A673 (cell line): ENCODE measurements at regions of chr20 and their contacts with region 1.

Region 1: DNA sequence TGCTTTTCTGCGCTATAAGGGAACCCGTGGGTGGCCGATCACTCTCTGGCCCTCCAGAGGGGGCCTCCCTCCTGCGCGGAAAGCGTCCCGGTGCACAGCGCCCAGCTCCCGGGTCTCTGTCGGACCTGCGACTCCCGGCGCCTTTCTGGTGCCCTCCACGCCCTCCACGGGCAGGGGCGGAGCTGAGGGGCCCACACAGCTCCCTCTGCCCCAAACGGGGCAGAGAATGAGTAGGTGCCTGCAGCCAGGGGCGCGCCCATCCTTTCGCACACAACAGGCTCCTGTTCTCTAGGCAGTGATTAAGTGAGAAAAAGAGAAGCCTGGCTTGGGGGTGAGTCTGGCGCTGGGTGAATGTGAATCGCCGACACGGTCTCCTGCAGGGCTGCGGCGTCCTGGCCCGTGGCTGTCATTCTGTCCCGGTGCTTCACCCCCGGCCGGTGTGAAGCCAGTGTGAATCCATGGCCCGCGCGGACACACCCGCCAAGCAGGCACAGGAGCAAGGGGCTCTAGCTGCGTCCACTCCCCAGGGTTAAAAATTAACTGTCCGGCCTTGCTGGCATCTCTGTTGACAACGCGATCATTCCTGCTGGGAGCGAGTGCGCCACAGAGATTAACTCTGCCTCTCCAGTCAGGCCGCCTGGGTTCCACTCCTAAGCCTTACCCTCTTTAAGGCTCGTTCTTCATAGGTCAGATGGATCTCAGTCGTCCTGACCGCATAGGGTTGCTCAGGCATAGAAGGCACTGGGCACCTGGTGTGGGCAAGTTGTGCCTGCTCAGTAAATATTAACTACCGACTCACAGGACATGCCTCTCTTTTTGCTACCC is 88.8 kb downstream of the PCSK2 start:
- DNase-seq: peak; percentile 47
- H3K4me3 ChIP-seq: peak overlapping the region; percentile 28
- H3K27ac ChIP-seq: peak overlapping the region; percentile 85
- H3K4me1 ChIP-seq: peaks cover 66% of the 10 kb centered on the region
- H3K27me3 ChIP-seq: no peaks in the 10 kb centered on the region
- CTCF ChIP-seq: no peak

Region 2: DNA sequence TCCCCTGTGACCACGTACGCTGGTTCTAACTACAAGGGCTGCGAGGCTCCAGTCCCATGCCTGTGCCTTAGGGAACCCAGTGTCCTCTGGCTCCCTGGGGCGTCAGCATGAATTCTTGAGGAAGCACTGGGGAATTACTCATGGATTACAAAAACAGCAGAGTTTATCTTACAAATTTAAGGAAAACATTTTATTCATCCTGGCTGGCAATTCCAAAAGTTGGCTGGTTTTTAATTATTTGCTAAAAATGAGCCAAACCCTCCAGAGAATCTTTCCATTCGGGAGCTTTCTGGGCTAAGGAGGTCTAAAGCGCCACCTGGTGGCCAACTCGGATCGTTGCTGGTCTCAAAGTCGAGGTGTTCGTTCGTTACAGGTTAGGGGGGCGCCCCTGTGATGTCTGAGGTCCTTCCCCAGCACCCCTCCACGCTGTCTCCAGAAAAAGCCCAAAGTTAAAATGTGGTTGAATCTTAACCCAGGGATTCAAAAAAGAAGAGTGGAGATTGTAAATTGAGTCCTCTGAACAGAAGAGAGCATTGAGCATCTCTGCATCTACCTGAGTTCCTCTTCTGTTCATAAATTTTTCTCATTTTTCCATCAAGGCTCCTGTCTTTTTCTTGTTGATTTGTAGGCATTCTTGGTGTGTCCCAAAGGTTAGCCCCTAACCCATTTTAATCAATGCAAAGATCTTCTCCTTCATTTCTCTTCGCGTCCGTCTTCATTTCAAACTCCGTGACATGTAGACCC is 116.2 kb after region 1 on chr20:
- CTCF ChIA-PET with region 1: no interaction called
- POLR2A ChIA-PET with region 1: no interaction called
- intact Hi-C with region 1: loop called (anchors 5 kb)
- DNase-seq: peak; percentile 81
- H3K4me3 ChIP-seq: no peak overlapping the region
- H3K27ac ChIP-seq: peak overlapping the region; percentile 51
- H3K4me1 ChIP-seq: peaks cover 42% of the 10 kb centered on the region
- H3K27me3 ChIP-seq: no peaks in the 10 kb centered on the region
- CTCF ChIP-seq: peak; percentile 96

Region 3: DNA sequence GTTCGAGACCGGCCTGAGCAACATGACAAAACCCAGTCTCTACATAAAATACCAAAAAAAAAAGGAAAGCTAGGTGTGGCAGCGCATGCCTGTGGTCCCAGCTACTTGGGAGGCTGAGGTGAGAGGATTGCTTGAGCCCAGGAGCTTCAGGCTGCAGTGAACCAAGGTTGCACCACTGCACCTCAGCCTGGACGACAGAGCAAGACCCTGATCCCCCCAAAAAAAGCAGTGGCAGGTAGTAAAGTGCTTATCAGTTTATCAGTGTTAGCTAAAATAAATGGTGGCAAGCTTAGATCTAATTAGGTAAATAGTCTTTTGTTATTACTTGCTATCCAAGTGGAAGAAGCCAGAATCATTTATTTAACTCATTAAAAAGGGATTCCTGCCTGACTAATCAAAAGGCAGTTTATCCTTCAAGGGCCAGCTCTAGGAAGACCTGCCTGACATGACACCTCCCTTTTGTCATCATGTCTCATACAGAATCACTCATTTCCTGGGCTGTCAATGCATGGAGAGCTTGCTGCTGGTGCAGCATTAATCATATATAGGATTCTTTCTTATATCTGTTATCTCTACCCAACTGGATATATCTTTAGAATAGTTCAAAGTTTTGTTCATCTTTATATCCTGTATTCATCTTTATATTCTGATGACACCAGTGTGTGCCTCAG is 263.9 kb after region 1 on chr20:
- CTCF ChIA-PET with region 1: interaction called, 10 read pairs
- POLR2A ChIA-PET with region 1: no interaction called
- intact Hi-C with region 1: no loop called
- DNase-seq: no peak
- H3K4me3 ChIP-seq: no peak overlapping the region
- H3K27ac ChIP-seq: no peak overlapping the region
- H3K4me1 ChIP-seq: no peaks in the 10 kb centered on the region
- H3K27me3 ChIP-seq: no peaks in the 10 kb centered on the region
- CTCF ChIP-seq: no peak